Psoas muscle (tissue), 8 donors: ENCODE measurements at regions of chr18 and their contacts with region 1.

Region 1: DNA sequence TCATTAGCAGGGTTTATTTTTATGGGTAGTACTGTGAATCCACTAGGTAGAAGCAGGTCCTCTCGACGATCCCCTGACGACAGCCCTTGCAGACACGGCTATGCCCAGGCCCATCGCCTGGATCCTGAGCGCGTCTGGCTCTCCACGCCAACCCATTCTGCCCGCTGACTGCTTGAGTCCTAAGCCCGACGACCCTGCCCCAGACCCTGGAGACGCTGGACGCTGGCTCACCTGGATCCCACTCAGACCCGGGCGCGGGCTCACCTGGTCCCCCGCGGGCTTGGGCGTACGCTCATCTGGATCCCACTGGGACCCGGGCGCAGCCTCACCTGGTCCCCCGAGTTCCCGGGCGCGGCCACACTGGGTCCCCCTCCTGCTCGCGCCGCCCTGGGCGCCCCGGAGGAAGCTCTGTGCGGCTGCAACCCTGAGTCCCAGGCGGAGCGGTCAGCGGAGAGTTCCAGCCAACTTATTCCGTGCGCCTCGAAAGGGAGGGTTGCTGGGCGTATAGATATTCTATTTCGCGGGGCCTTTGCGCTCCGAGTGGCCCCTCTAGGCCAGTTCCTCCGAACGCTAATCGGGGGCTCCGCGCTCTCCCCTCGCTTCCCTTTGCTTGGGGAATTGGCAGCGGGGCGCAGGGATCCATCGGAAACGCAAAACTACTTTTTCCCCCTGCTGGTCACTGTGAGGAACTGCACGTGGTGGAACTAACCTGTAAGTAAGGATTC is 22.4 kb upstream of the RMP24 start:
- DNase-seq: peak; percentile 38 to 72
- ATAC-seq: peak; percentile 76 to 96 (median 82)
- H3K4me3 ChIP-seq: peak overlapping the region; percentile 84
- H3K27ac ChIP-seq: no peak overlapping the region
- H3K4me1 ChIP-seq: no peaks in the 10 kb centered on the region
- H3K27me3 ChIP-seq: no peaks in the 10 kb centered on the region
- CTCF ChIP-seq: peak; percentile 97

Region 2: GRCh38 chr18:35386600-35387351 is 563.3 kb before region 1 on chr18:
- intact Hi-C with region 1: loop called in 1 of 2 experiments (anchors 10 kb)
- DNase-seq: peak; percentile 21 to 66
- ATAC-seq: peak in 3 of 4 donors; percentile 54 to 81 (median 75)
- H3K4me3 ChIP-seq: no peak overlapping the region
- H3K27ac ChIP-seq: no peak overlapping the region
- H3K4me1 ChIP-seq: no peaks in the 10 kb centered on the region
- H3K27me3 ChIP-seq: peaks cover 0 to 4% (median 2%) of the 10 kb centered on the region in 3 donors
- CTCF ChIP-seq: peak; percentile 83

Region 3: DNA sequence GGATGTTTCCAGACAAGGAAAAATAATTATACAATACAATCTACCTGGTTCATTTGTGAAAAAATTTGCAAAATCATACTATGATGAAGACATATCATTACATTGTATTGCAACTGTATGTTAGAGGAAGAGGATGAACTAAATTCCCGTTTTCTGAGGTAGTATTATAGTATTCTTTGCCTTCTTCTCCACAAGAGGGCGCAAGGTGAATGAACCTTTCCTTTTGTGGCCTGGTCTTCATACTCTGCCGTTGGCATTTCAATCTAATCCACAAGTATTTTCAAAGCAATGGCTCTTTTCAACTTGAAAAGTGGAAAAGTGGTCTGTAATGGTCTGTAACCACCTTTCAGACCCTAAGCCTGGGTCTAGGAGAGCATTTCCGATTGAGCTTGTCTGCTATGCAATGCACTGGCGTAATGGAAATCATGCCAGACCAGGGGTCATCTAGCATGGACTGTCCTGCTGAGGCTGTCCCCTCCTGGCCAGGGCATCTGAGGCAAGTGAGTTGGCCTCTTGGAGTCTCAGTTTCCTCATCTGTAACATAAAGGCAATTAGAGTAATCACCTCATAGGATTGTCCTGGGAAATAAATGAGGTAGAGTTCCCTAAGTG is 542.1 kb before region 1 on chr18:
- intact Hi-C with region 1: loop called in 1 of 2 experiments (anchors 5 kb)
- DNase-seq: no peak
- ATAC-seq: peak; percentile 73 to 90 (median 77)
- H3K4me3 ChIP-seq: no peak overlapping the region
- H3K27ac ChIP-seq: no peak overlapping the region
- H3K4me1 ChIP-seq: no peaks in the 10 kb centered on the region
- H3K27me3 ChIP-seq: no peaks in the 10 kb centered on the region
- CTCF ChIP-seq: peak; percentile 83

Region 4: GRCh38 chr18:35580701-35581539 is 369.1 kb before region 1 on chr18:
- intact Hi-C with region 1: loop called in 1 of 2 experiments (anchors 10 kb)
- DNase-seq: peak; percentile 68 to 80
- ATAC-seq: peak; percentile 77 to 85 (median 82)
- H3K4me3 ChIP-seq: peak overlapping the region; percentile 95
- H3K27ac ChIP-seq: peak overlapping the region; percentile 98
- H3K4me1 ChIP-seq: peaks cover 17% of the 10 kb centered on the region
- H3K27me3 ChIP-seq: no peaks in the 10 kb centered on the region
- CTCF ChIP-seq: no peak

Region 5: GRCh38 chr18:35756506-35757117 is 193.5 kb before region 1 on chr18:
- intact Hi-C with region 1: loop called in 1 of 2 experiments (anchors 1 kb)
- DNase-seq: no peak
- ATAC-seq: peak in 3 of 4 donors; percentile 62 to 67 (median 62)
- H3K4me3 ChIP-seq: no peak overlapping the region
- H3K27ac ChIP-seq: no peak overlapping the region
- H3K4me1 ChIP-seq: no peaks in the 10 kb centered on the region
- H3K27me3 ChIP-seq: no peaks in the 10 kb centered on the region
- CTCF ChIP-seq: peak; percentile 79

Region 6: DNA sequence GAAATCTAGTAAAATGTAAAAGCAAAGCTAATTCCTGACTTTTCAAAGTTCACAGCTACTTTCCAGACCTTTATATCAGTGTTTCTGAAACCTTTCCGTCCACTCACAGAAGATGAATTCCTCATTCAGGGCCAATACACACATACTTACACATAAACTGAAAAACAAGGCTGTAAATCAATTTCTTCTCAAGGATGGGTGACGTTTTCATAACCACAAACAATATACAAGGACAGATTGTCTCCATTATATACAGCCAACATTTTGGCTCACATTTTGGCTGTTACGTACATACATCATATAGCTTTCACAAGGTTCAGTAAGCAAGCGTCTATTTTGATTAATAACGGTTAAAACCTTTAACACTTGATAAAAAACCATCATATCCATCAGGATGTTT is 115.9 kb after region 1 on chr18:
- intact Hi-C with region 1: no loop called
- DNase-seq: no peak
- ATAC-seq: no peak
- H3K4me3 ChIP-seq: peak overlapping the region; percentile 88
- H3K27ac ChIP-seq: no peak overlapping the region
- H3K4me1 ChIP-seq: peaks cover 14% of the 10 kb centered on the region
- H3K27me3 ChIP-seq: no peaks in the 10 kb centered on the region
- CTCF ChIP-seq: no peak

Region 7: GRCh38 chr18:36075903-36076579 is 126.0 kb after region 1 on chr18:
- intact Hi-C with region 1: no loop called
- DNase-seq: no peak
- ATAC-seq: peak in 2 of 4 donors; percentile 45 to 59
- H3K4me3 ChIP-seq: no peak overlapping the region
- H3K27ac ChIP-seq: no peak overlapping the region
- H3K4me1 ChIP-seq: no peaks in the 10 kb centered on the region
- H3K27me3 ChIP-seq: no peaks in the 10 kb centered on the region
- CTCF ChIP-seq: no peak